Naive thymus-derived CD4-positive, alpha-beta T cell (primary cell): ENCODE measurements at regions of chr3 and their contacts with region 1.

Region 1: GRCh38 chr3:98817547-98818041 is 54.5 kb downstream of the ST3GAL6 start:
- DNase-seq: peak in 6 of 9 donors; percentile 12 to 54 (median 40)
- ATAC-seq: peak; percentile 83
- H3K4me3 ChIP-seq: no peak overlapping the region
- H3K4me3 Mint-ChIP-seq: no peak overlapping the region
- H3K27ac ChIP-seq: no peak overlapping the region
- H3K27ac Mint-ChIP-seq: no peak overlapping the region
- H3K4me1 ChIP-seq: no peaks in the 10 kb centered on the region
- H3K4me1 Mint-ChIP-seq: peaks cover 0 to 6% (median 1%) of the 10 kb centered on the region in 7 donors
- H3K27me3 ChIP-seq: no peaks in the 10 kb centered on the region
- H3K27me3 Mint-ChIP-seq: no peaks in the 10 kb centered on the region

Region 2: DNA sequence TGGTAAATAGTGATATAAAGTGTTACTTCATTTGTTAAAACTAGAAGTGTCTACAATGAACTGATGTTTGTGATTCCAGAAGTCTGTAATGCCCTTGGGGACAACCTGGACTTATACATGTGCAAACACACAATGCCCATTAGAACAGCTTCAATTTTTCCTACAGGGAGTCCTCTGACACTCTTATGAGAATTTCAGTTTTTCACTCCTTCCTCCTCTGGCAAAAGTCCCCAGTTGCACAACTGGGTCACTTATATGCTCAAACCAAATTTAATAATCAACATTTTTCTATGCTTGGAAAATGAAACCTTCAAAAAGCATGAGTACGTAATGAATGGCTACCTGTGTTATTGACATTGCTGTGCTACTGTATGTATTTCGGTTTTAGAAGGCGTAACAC is 651.2 kb before region 1 on chr3 and contains the start of gene OR5H15:
- CTCF ChIA-PET with region 1: no interaction called
- POLR2A ChIA-PET with region 1: no interaction called
- intact Hi-C with region 1: no loop called
- DNase-seq: no peak
- ATAC-seq: no peak
- H3K4me3 ChIP-seq: no peak within 1 kb of the TSS
- H3K4me3 Mint-ChIP-seq: no peak within 1 kb of the TSS
- H3K27ac ChIP-seq: no peak within 1 kb of the TSS
- H3K27ac Mint-ChIP-seq: no peak within 1 kb of the TSS
- H3K4me1 ChIP-seq: no peaks in the 10 kb centered on the region
- H3K4me1 Mint-ChIP-seq: no peaks in the 10 kb centered on the region
- H3K27me3 ChIP-seq: peaks cover 0 to 3% of the 10 kb centered on the region in 2 donors
- H3K27me3 Mint-ChIP-seq: peaks cover 4 to 17% (median 7%) of the 10 kb centered on the region in 5 donors
- total RNA-seq, gene OR5H15: not detected

Region 3: DNA sequence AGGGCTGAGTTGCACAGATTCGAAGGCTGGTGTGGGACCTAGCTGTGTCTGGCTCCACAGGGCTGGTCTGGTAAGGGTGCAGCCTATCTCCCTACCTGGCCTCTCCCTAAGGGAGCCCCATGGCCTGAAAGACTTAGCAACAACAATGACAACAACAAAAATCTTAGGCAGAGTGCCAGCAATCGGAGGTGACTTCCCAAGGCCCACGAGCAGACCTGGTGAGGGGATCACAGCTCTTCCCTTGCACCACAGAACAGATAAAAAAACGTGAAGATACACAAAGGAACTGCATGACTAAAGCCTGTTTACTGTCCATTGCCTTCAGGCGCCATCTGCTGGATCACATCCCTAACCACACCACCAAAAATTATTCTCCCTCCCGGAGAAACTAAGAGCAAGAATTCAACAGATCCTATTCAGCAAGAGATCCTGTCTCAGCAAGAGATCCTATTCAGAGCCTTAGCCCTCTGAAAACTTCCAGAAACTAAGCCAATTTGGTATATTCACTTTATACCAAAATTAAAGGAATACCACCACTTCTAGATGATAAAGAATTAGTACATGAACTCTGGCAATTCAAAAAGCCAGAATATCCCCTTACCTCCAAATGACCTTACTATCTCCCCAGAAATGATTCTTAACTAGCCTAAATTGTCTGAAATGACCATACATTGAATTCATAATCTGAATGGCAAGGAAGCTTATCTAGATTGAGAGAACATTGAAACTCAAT is 488.0 kb before region 1 on chr3:
- CTCF ChIA-PET with region 1: no interaction called
- POLR2A ChIA-PET with region 1: no interaction called
- intact Hi-C with region 1: loop called in 1 of 2 experiments (anchors 5 kb)
- DNase-seq: peak in 8 of 9 donors; percentile 9 to 48 (median 34)
- ATAC-seq: peak; percentile 83
- H3K4me3 ChIP-seq: no peak overlapping the region
- H3K4me3 Mint-ChIP-seq: no peak overlapping the region
- H3K27ac ChIP-seq: no peak overlapping the region
- H3K27ac Mint-ChIP-seq: peak overlapping the region in 1 of 9 donors; percentile 8
- H3K4me1 ChIP-seq: no peaks in the 10 kb centered on the region
- H3K4me1 Mint-ChIP-seq: peaks cover 0 to 25% (median 0%) of the 10 kb centered on the region in 7 donors
- H3K27me3 ChIP-seq: no peaks in the 10 kb centered on the region
- H3K27me3 Mint-ChIP-seq: peaks cover 16 to 66% (median 32%) of the 10 kb centered on the region in 5 donors

Region 4: GRCh38 chr3:98901392-98902350 is 84.1 kb after region 1 on chr3 and contains the start of gene DCBLD2:
- CTCF ChIA-PET with region 1: interaction called, 5 read pairs
- POLR2A ChIA-PET with region 1: no interaction called
- intact Hi-C with region 1: loop called (anchors 5 kb)
- DNase-seq: peak; percentile 90 to 96 (median 94)
- ATAC-seq: peak; percentile 99
- H3K4me3 ChIP-seq: peak within 1 kb of the TSS; percentile 86
- H3K4me3 Mint-ChIP-seq: peak within 1 kb of the TSS; percentile 89 to 97 (median 94)
- H3K27ac ChIP-seq: peak within 1 kb of the TSS; percentile 78
- H3K27ac Mint-ChIP-seq: peak within 1 kb of the TSS; percentile 44 to 96 (median 86)
- H3K4me1 ChIP-seq: peaks cover 5% of the 10 kb centered on the region in 2 donors
- H3K4me1 Mint-ChIP-seq: peaks cover 14 to 27% (median 22%) of the 10 kb centered on the region in 7 donors
- H3K27me3 ChIP-seq: no peaks in the 10 kb centered on the region
- H3K27me3 Mint-ChIP-seq: peaks cover 0 to 30% (median 8%) of the 10 kb centered on the region in 5 donors
- total RNA-seq, gene DCBLD2: 1.9 to 4.7 (median 2.9) TPM

Region 5: DNA sequence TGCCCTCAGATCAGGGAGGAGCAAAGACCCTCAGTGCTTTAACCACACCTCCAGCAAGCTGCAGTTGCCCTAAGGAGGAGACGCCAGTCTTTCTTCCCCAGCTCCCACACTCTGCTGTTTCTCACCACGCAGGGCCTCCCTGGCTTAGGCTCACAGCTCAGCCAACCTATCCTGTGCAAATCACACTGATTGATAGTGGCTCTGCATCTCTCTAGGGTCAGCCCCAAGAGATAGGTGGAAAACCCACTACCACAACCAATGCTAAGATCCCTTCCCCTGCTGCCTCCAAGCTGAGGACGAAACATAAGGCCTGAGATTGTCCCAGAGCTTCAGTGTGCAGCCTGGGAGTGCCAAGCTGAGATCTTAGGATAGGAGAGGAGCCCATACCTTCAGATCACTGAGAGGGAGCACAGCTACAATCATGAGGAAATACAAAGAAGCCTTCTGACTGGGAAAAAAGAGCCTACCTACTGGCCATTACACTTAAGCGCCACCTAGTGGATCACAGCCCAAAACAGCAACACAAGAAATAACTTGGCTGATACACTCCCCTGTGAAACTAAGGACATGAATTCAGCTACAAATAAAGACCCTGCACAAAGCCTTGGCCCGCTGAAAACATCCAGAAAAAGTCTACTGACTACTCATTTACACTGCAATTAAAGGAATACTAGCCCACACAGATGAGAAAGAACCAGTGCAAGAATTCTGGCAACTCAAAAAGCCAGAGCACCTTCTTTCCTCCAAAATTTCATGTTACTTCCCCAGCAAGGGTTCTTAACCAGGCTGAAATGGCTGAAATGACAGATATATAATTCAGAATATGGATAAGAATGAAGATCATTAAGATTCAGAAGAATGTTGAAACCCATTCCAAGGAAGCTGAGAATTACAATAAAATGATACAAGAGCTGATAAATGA is 355.4 kb after region 1 on chr3:
- CTCF ChIA-PET with region 1: interaction called, 3 read pairs
- POLR2A ChIA-PET with region 1: no interaction called
- intact Hi-C with region 1: loop called in 1 of 2 experiments (anchors 1 kb)
- DNase-seq: peak in 3 of 9 donors; percentile 10 to 28 (median 10)
- ATAC-seq: no peak
- H3K4me3 ChIP-seq: no peak overlapping the region
- H3K4me3 Mint-ChIP-seq: no peak overlapping the region
- H3K27ac ChIP-seq: no peak overlapping the region
- H3K27ac Mint-ChIP-seq: no peak overlapping the region
- H3K4me1 ChIP-seq: no peaks in the 10 kb centered on the region
- H3K4me1 Mint-ChIP-seq: no peaks in the 10 kb centered on the region
- H3K27me3 ChIP-seq: no peaks in the 10 kb centered on the region
- H3K27me3 Mint-ChIP-seq: no peaks in the 10 kb centered on the region

Region 6: DNA sequence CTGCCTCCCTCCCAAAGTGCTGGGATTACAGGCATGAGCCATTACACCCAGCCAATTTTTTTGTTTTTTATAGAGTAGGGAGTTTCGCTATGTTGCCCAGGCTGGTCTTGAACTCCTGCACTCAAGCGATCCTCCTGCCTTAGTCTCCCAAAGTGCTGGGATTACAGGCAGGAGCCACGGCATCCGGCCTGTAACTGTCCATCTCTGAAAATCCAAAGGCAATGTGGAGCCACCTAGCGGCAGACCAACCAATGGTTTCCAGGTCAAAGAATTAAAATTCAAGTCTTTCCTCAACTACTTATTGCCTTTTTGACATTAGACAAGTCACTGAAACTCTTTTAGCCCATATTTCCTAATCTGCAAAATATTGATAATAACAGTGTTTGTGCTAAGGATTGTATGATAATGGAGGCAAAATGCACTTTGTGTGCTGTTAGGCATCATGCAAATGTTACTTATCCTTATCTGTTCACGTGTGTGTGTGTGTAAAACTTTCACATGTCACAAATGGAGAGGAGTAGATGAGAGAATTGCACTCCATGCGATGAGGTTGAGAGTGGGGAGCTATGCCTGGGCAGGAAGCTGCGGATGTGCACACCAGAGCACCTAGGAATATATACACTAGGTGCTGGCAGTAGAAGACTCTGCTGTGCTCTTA is 869.5 kb after region 1 on chr3:
- CTCF ChIA-PET with region 1: interaction called, 4 read pairs
- POLR2A ChIA-PET with region 1: no interaction called
- intact Hi-C with region 1: loop called in 1 of 2 experiments (anchors 1 kb)
- DNase-seq: peak in 2 of 9 donors; percentile 12 to 31
- ATAC-seq: no peak
- H3K4me3 ChIP-seq: no peak overlapping the region
- H3K4me3 Mint-ChIP-seq: no peak overlapping the region
- H3K27ac ChIP-seq: no peak overlapping the region
- H3K27ac Mint-ChIP-seq: no peak overlapping the region
- H3K4me1 ChIP-seq: no peaks in the 10 kb centered on the region
- H3K4me1 Mint-ChIP-seq: no peaks in the 10 kb centered on the region
- H3K27me3 ChIP-seq: no peaks in the 10 kb centered on the region
- H3K27me3 Mint-ChIP-seq: peaks cover 4 to 20% (median 9%) of the 10 kb centered on the region in 5 donors

Region 7: GRCh38 chr3:99789011-99789721 is 971.6 kb after region 1 on chr3:
- CTCF ChIA-PET with region 1: no interaction called
- POLR2A ChIA-PET with region 1: no interaction called
- intact Hi-C with region 1: loop called in 1 of 2 experiments (anchors 1 kb)
- DNase-seq: peak in 3 of 9 donors; percentile 1 to 10 (median 9)
- ATAC-seq: peak; percentile 76
- H3K4me3 ChIP-seq: no peak overlapping the region
- H3K4me3 Mint-ChIP-seq: no peak overlapping the region
- H3K27ac ChIP-seq: no peak overlapping the region
- H3K27ac Mint-ChIP-seq: no peak overlapping the region
- H3K4me1 ChIP-seq: no peaks in the 10 kb centered on the region
- H3K4me1 Mint-ChIP-seq: peaks cover 0 to 3% (median 0%) of the 10 kb centered on the region in 7 donors
- H3K27me3 ChIP-seq: no peaks in the 10 kb centered on the region
- H3K27me3 Mint-ChIP-seq: peaks cover 0 to 40% (median 8%) of the 10 kb centered on the region in 5 donors

Region 8: GRCh38 chr3:100254168-100254777 is 1436.7 kb after region 1 on chr3:
- CTCF ChIA-PET with region 1: no interaction called
- POLR2A ChIA-PET with region 1: no interaction called
- intact Hi-C with region 1: loop called in 1 of 2 experiments (anchors 10 kb)
- DNase-seq: peak in 6 of 9 donors; percentile 12 to 44 (median 22)
- ATAC-seq: peak; percentile 70
- H3K4me3 ChIP-seq: no peak overlapping the region
- H3K4me3 Mint-ChIP-seq: no peak overlapping the region
- H3K27ac ChIP-seq: no peak overlapping the region
- H3K27ac Mint-ChIP-seq: no peak overlapping the region
- H3K4me1 ChIP-seq: no peaks in the 10 kb centered on the region
- H3K4me1 Mint-ChIP-seq: peaks cover 0 to 16% (median 11%) of the 10 kb centered on the region in 7 donors
- H3K27me3 ChIP-seq: no peaks in the 10 kb centered on the region
- H3K27me3 Mint-ChIP-seq: no peaks in the 10 kb centered on the region